Naive thymus-derived CD8-positive, alpha-beta T cell (primary cell): ENCODE measurements at regions of chr17 and their contacts with region 1.

Region 1: GRCh38 chr17:35063514-35064223 is at the start of gene RFFL:
- DNase-seq: peak; percentile 54 to 91 (median 80)
- ATAC-seq: peak; percentile 98 to 99
- H3K4me3 Mint-ChIP-seq: peak within 1 kb of the TSS; percentile 59 to 86 (median 78)
- H3K27ac Mint-ChIP-seq: peak within 1 kb of the TSS; percentile 46 to 98 (median 94)
- H3K4me1 Mint-ChIP-seq: peaks cover 21 to 63% (median 56%) of the 10 kb centered on the region in 4 donors
- H3K27me3 Mint-ChIP-seq: no peaks in the 10 kb centered on the region
- polyA plus RNA-seq, gene RFFL: 30.8 to 39.7 (median 31.9) TPM

Region 2: DNA sequence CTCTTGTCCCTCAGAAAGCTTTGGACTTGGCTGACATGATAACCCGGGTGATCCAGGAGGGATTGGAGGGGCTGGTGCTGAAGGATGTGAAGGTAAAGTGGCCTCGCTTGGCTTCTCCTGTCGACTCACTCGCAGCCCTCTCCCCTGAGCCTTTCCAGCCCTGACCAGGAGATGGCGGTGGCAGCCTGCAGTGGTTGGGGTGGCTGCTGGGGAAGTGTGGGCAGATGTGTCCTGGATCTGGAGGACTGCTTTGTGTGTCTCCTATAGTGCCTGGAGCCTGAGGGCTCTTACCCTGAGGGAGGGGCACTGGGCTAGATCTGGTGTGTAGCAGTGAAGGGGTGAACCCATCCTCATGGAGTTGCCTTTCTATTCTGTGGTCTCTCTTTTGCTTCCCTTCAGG is 65.5 kb before region 1 on chr17:
- POLR2A ChIA-PET with region 1: interaction called, 14 read pairs
- DNase-seq: peak; percentile 61 to 87 (median 72)
- ATAC-seq: peak; percentile 91 to 97
- H3K4me3 Mint-ChIP-seq: no peak overlapping the region
- H3K27ac Mint-ChIP-seq: peak overlapping the region; percentile 33 to 90 (median 83)
- H3K4me1 Mint-ChIP-seq: peaks cover 0 to 6% (median 5%) of the 10 kb centered on the region in 4 donors
- H3K27me3 Mint-ChIP-seq: no peaks in the 10 kb centered on the region

Region 3: DNA sequence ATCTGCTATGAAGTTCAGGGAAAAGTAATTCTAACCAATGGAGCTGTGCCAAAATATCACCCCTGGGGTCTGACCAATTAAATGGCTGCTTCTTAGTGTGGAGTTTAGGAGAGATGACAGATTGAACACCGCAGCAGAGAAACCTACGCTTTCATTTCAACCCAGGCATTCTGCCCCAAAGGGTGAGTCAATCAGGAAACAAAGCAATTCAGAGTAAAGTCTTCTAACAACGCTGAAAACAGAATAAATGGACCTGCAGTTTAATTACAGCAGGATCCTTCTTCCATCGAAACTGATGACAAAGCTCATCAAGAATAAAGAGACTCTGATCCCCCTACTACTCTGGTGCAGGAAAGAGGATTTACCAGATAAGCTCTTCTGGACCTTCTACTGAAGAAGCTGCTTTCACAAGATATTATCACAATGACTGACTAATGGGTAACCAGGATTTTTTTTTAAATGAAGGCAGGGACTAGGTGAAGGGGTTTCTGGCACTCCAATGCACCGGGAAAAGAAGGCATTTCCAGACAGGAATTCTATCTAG is 16.9 kb before region 1 on chr17:
- POLR2A ChIA-PET with region 1: interaction called, 37 read pairs
- DNase-seq: peak in 9 of 10 donors; percentile 41 to 77 (median 70)
- ATAC-seq: peak; percentile 68 to 71
- H3K4me3 Mint-ChIP-seq: peak overlapping the region; percentile 70 to 91 (median 81)
- H3K27ac Mint-ChIP-seq: peak overlapping the region; percentile 92 to 99 (median 96)
- H3K4me1 Mint-ChIP-seq: peaks cover 33 to 82% (median 75%) of the 10 kb centered on the region in 4 donors
- H3K27me3 Mint-ChIP-seq: no peaks in the 10 kb centered on the region

Region 4: GRCh38 chr17:35082073-35082657 is 18.5 kb after region 1 on chr17:
- POLR2A ChIA-PET with region 1: interaction called, 27 read pairs
- DNase-seq: no peak
- ATAC-seq: no peak
- H3K4me3 Mint-ChIP-seq: peak overlapping the region in 8 of 10 donors; percentile 41 to 83 (median 70)
- H3K27ac Mint-ChIP-seq: peak overlapping the region in 9 of 10 donors; percentile 51 to 85 (median 70)
- H3K4me1 Mint-ChIP-seq: peaks cover 29 to 86% (median 72%) of the 10 kb centered on the region in 4 donors
- H3K27me3 Mint-ChIP-seq: no peaks in the 10 kb centered on the region